PC-3 (cell line): ENCODE measurements at regions of chr15 and their contacts with region 1.

Region 1: GRCh38 chr15:64209680-64210334 is 47.0 kb upstream of the PPIB start:
- DNase-seq: peak; percentile 68
- ATAC-seq: peak; percentile 54
- H3K4me3 ChIP-seq: no peak overlapping the region
- H3K27ac ChIP-seq: no peak overlapping the region
- H3K4me1 ChIP-seq: peaks cover 11% of the 10 kb centered on the region; the same call in 1 of the 2 replicates
- H3K27me3 ChIP-seq: no peaks in the 10 kb centered on the region
- CTCF ChIP-seq: peak; percentile 67

Region 2: DNA sequence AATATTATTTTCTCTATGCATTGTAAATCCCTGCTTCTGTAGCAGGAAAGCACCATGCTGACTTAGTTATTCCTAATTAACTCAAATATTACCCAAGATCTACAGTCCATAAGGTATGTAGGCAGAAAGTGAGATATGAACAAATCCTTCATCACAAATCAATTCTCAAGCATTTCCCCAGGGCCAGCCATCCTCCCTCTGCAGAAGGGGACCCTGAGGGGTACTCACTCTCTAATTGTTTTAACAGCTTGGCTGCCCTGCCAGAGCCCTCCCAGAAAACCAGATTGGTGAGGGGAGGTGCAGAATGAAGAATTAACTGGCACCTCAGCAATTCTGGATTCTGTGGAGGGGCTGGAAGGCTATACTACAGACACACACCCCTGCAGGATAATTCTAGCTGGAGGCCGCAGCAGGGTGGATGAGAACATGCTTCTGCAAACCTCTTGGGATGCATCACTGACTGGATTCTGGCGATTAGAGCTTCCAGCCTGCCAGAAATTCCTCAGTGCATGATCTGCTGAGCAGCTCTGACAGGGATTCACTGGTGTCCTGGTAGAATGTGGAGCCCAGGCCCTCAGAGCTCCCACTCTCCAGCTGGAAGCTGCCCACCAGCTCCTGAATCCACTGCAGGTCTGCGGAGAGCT is 287.4 kb before region 1 on chr15:
- CTCF ChIA-PET with region 1: no interaction called
- POLR2A ChIA-PET with region 1: no interaction called
- intact Hi-C with region 1: no loop called
- DNase-seq: no peak
- ATAC-seq: no peak
- H3K4me3 ChIP-seq: no peak overlapping the region
- H3K27ac ChIP-seq: no peak overlapping the region
- H3K4me1 ChIP-seq: no peaks in the 10 kb centered on the region
- H3K27me3 ChIP-seq: no peaks in the 10 kb centered on the region
- CTCF ChIP-seq: no peak

Region 3: DNA sequence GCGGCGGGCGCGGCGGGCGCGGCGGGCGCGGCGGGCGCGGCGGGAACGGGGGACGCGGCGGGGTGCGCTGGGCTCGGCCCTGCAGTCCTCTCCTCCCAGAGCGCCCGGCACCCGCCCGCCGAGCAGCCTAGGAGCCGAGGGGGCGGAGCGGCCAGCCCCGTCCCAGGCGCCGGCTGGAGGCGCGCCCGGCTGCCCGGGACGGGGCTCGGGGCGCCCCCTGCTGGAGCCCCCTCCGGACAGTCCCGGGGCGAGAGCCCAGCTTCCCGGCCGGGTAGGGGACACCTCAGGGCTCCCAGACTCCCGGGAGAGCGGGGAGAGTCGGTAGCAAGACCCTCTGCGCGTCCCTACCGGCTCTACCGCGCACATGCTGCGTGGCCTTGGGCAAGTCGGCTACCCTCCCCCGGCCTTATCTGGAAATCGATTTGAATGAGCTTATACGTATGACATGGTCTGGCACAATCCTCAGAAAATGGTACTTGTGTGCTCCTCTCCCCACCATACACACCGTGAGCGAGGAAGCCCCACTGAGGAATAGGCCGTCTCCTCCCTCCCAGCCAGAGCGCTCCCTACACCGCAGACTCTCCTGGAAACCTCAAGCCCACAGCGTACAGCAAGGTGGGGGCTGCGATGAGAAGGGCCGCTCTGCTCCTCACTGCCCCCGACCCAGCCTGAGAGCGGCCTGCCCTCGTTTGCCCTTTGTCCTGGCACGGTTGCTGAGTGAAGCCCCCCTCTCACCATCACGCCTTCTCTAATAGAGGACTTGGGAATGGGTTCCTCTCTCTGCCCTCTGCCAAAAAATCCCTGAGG is 163.3 kb before region 1 on chr15 and contains the start of gene DAPK2:
- CTCF ChIA-PET with region 1: no interaction called
- POLR2A ChIA-PET with region 1: no interaction called
- intact Hi-C with region 1: no loop called
- DNase-seq: peak; percentile 65
- ATAC-seq: peak; percentile 93
- H3K4me3 ChIP-seq: peak within 1 kb of the TSS; percentile 63
- H3K27ac ChIP-seq: no peak within 1 kb of the TSS
- H3K4me1 ChIP-seq: peaks cover 10% of the 10 kb centered on the region; the same call in 1 of the 2 replicates
- H3K27me3 ChIP-seq: no peaks in the 10 kb centered on the region
- CTCF ChIP-seq: peak; percentile 56
- total RNA-seq, gene DAPK2: 1.4 and 5.2 TPM in 2 replicates

Region 4: DNA sequence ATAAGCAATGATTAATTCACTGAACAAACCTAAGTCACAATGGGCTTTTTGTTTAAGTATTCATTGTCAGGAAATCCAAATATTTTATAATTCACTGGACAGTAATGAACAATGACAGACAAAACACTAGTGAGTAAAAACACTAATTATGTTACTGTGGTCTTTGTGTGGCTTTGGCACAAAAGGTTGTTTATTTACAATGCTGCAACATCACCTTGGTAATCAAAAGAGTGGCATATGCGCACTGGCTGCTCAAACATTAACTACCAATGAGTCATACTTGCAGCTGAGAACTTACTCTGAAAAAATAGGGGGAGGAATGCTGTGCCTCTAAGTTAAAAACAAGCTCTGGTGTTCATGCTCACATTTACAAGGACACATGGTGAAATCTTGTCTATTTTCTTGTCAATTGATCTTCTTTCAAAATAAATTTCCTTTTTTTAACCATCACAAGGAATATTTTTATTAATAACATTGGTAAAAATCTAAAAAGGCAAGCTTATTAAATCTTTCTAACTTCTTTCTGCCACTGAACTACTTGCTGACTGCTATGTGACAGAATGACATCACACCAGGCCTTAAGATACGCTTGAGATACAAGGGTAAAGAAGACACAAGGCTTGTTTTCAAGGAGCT is 38.2 kb after region 1 on chr15:
- CTCF ChIA-PET with region 1: no interaction called
- POLR2A ChIA-PET with region 1: no interaction called
- intact Hi-C with region 1: loop called (anchors 5 kb)
- DNase-seq: peak; percentile 87
- ATAC-seq: peak; percentile 56
- H3K4me3 ChIP-seq: peak overlapping the region; percentile 49; the same call in 1 of the 2 replicates
- H3K27ac ChIP-seq: peak overlapping the region; percentile 95
- H3K4me1 ChIP-seq: peaks cover 51% of the 10 kb centered on the region
- H3K27me3 ChIP-seq: no peaks in the 10 kb centered on the region
- CTCF ChIP-seq: no peak